GM12878 (cell line): ENCODE measurements at regions of chr6 and their contacts with region 1.

Region 1: GRCh38 chr6:39610221-39610620 is 115.0 kb downstream of the KIF6 start:
- DNase-seq: no peak
- ATAC-seq: no peak
- H3K4me3 ChIP-seq: no peak overlapping the region
- H3K27ac ChIP-seq: no peak overlapping the region
- H3K4me1 ChIP-seq: no peaks in the 10 kb centered on the region
- H3K27me3 ChIP-seq: no peaks in the 10 kb centered on the region
- CTCF ChIP-seq: no peak
- EP300 ChIP-seq: no peak
- POLR2A ChIP-seq: no peak
- RAD21 ChIP-seq: no peak

Region 2: GRCh38 chr6:38639498-38640215 is 970.6 kb before region 1 on chr6 and contains the start of gene BTBD9:
- CTCF ChIA-PET with region 1: no interaction called
- POLR2A ChIA-PET with region 1: no interaction called
- RAD21 ChIA-PET with region 1: no interaction called
- SMC1A ChIA-PET with region 1: no interaction called
- in situ Hi-C with region 1: no loop called
- intact Hi-C with region 1: no loop called
- DNase-seq: peak; percentile 44
- ATAC-seq: peak; percentile 90
- H3K4me3 ChIP-seq: peak within 1 kb of the TSS; percentile 89
- H3K27ac ChIP-seq: peak within 1 kb of the TSS; percentile 73
- H3K4me1 ChIP-seq: peaks cover 6% of the 10 kb centered on the region; the same call in 1 of the 2 replicates
- H3K27me3 ChIP-seq: no peaks in the 10 kb centered on the region
- CTCF ChIP-seq: no peak
- EP300 ChIP-seq: no peak
- POLR2A ChIP-seq: peak; percentile 87
- RAD21 ChIP-seq: no peak
- polyA plus RNA-seq, gene BTBD9: 0.22 to 0.55 TPM

Region 3: DNA sequence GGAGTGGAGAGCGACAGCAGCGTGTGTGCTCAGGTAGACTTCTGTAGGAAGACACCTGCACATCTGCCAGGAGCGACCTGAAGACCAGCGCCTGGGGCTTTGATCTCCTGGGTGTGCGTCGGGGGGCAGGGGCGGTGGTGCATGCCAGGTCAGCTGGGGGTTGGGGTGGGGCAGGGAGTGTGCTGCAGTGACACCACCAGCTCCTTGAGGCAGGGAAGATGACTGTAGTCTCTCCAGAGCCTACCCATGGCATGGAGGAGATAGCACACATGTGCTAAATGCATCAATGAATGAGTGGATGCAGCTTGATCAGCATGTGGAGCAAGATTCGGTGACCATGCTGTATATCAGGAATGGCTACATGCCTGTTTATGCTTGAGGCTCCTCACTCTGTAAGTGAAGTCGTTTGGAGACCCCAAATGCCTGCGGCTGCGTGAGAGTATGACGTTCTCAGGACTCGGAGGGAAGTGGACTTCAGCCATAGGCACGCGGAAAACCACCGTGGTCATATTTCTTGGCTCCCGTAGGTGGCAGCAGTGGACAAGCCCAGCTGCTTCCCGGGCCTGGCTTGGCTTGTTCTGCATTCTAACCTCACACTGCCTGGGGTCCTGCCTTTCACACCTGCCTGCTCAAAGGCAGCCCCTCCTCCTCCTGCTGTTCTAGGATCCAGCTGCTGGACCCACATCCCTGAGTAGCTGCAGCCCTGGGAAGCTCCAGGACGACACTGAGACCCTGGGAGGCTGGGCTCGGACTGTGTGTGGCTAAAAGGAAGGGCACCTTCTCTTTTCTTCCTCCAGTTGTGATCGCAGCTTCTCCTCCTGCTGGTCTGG is 248.3 kb before region 1 on chr6:
- CTCF ChIA-PET with region 1: interaction called, 3 read pairs
- POLR2A ChIA-PET with region 1: no interaction called
- RAD21 ChIA-PET with region 1: interaction called, 4 read pairs
- SMC1A ChIA-PET with region 1: interaction called, 3 read pairs
- in situ Hi-C with region 1: no loop called
- intact Hi-C with region 1: loop called (anchors 5 kb)
- DNase-seq: no peak
- ATAC-seq: peak; percentile 95
- H3K4me3 ChIP-seq: no peak overlapping the region
- H3K27ac ChIP-seq: no peak overlapping the region
- H3K4me1 ChIP-seq: no peaks in the 10 kb centered on the region
- H3K27me3 ChIP-seq: no peaks in the 10 kb centered on the region
- CTCF ChIP-seq: peak; percentile 71 to 92 (median 85)
- EP300 ChIP-seq: no peak
- POLR2A ChIP-seq: no peak
- RAD21 ChIP-seq: peak; percentile 81

Region 4: GRCh38 chr6:39471954-39472659 is 138.1 kb before region 1 on chr6:
- CTCF ChIA-PET with region 1: no interaction called
- POLR2A ChIA-PET with region 1: no interaction called
- RAD21 ChIA-PET with region 1: interaction called, 3 read pairs
- SMC1A ChIA-PET with region 1: interaction called, 3 read pairs
- in situ Hi-C with region 1: no loop called
- intact Hi-C with region 1: loop called (anchors 10 kb)
- DNase-seq: peak; percentile 45
- ATAC-seq: peak; percentile 93
- H3K4me3 ChIP-seq: no peak overlapping the region
- H3K27ac ChIP-seq: no peak overlapping the region
- H3K4me1 ChIP-seq: peaks cover 4% of the 10 kb centered on the region; the same call in 1 of the 2 replicates
- H3K27me3 ChIP-seq: no peaks in the 10 kb centered on the region
- CTCF ChIP-seq: no peak
- EP300 ChIP-seq: no peak
- POLR2A ChIP-seq: no peak
- RAD21 ChIP-seq: no peak

Region 5: GRCh38 chr6:39593644-39594043 is 16.6 kb before region 1 on chr6:
- CTCF ChIA-PET with region 1: interaction called, 3 read pairs
- POLR2A ChIA-PET with region 1: interaction called, 5 read pairs
- RAD21 ChIA-PET with region 1: interaction called, 5 read pairs
- SMC1A ChIA-PET with region 1: interaction called, 24 read pairs
- in situ Hi-C with region 1: no loop called
- intact Hi-C with region 1: no loop called
- DNase-seq: no peak
- ATAC-seq: peak; percentile 96
- H3K4me3 ChIP-seq: no peak overlapping the region
- H3K27ac ChIP-seq: no peak overlapping the region
- H3K4me1 ChIP-seq: no peaks in the 10 kb centered on the region
- H3K27me3 ChIP-seq: no peaks in the 10 kb centered on the region; a peak in 1 of 4 replicates
- CTCF ChIP-seq: no peak
- EP300 ChIP-seq: no peak
- POLR2A ChIP-seq: no peak
- RAD21 ChIP-seq: no peak

Region 6: GRCh38 chr6:39642270-39642669 is 32.0 kb after region 1 on chr6:
- CTCF ChIA-PET with region 1: interaction called, 3 read pairs
- POLR2A ChIA-PET with region 1: no interaction called
- RAD21 ChIA-PET with region 1: interaction called, 20 read pairs
- SMC1A ChIA-PET with region 1: interaction called, 25 read pairs
- in situ Hi-C with region 1: no loop called
- intact Hi-C with region 1: no loop called
- DNase-seq: no peak
- ATAC-seq: peak; percentile 37
- H3K4me3 ChIP-seq: no peak overlapping the region
- H3K27ac ChIP-seq: no peak overlapping the region
- H3K4me1 ChIP-seq: no peaks in the 10 kb centered on the region
- H3K27me3 ChIP-seq: no peaks in the 10 kb centered on the region; a peak in 1 of 4 replicates
- CTCF ChIP-seq: 0 out of 6 replicates have a peak, but pooled peaks of 1 of the 3 experiments have one; percentile 8
- EP300 ChIP-seq: no peak
- POLR2A ChIP-seq: no peak
- RAD21 ChIP-seq: no peak